ENCODE measurements at regions of chr14 and their contacts with region 1.

Region 1: DNA sequence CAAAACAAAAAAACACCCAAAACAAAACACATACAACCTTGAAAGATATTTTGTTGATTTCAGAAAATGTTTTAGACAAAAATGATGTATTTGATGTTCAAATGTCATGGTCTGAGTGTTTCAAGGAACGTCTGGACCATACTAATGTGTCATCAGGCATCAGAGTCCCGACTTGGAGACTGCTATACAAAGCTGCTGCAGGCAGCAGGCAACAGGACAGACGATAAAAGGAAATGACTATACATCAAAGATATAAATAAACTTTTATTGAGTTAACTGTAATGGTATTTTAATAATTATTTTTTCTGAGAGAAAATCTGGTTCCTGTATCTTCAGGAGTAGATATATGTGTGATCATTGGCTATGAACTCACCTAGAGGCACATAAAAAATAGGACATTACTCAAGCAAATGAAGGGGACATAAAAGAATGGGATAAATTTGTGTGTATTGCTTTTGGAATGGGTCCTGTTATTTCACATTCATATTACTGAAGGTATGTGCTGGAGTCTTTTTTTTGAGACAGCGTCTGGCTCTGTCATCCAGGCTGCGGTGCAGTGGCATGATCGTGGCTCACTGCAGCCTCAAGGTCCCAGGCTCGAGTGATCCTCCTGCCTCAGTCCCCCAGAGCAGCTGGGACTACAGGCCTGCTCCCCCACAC is 87.3 kb upstream of the HECTD1 start:
- DNase-seq: no peak
- H3K4me3 ChIP-seq: no peak overlapping the region
- CTCF ChIP-seq: no peak
- POLR2A ChIP-seq: no peak

Region 2: GRCh38 chr14:30849354-30849753 is 445.5 kb before region 1 on chr14:
- intact Hi-C with region 1: no loop called
- DNase-seq: no peak
- H3K4me3 ChIP-seq: no peak overlapping the region
- CTCF ChIP-seq: no peak
- POLR2A ChIP-seq: no peak

Region 3: DNA sequence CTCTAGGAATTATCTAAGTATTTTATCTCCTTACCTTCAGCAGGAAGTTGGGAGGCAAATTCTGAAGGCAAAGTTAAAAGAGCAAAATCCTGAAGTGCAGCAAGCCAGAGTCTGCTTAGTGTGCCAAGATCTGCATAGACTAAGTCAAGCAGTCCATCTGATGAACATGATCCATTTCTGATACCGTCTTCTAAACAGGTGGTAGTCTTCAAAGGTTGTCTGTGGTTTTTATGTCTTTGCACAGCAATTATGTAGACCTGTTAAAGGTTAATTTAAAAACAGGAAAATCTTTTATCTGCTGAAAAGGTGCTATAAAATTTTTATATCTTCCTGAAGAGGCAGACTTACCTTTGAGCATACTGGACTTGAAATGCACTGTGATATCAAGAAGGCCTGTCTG is 18.1 kb after region 1 on chr14:
- intact Hi-C with region 1: loop called (anchors 2 kb)
- DNase-seq: no peak
- H3K4me3 ChIP-seq: no peak overlapping the region
- CTCF ChIP-seq: no peak
- POLR2A ChIP-seq: no peak